WTC11 (cell line): ENCODE measurements at regions of chr11 and their contacts with region 1.

Region 1: GRCh38 chr11:124673333-124674167 is at the starts of genes SIAE and SPA17:
- DNase-seq: peak; percentile 96
- ATAC-seq: peak; percentile 97
- H3K4me3 Mint-ChIP-seq: peak within 1 kb of the TSS; percentile 90
- H3K27ac Mint-ChIP-seq: peak within 1 kb of the TSS; percentile 86
- H3K4me1 Mint-ChIP-seq: peaks cover 11% of the 10 kb centered on the region
- H3K27me3 Mint-ChIP-seq: peaks cover 23% of the 10 kb centered on the region
- CTCF ChIP-seq: no peak
- total RNA-seq, gene SIAE: 4.4 to 4.9 TPM (median 4.8 TPM) in 3 replicates
- total RNA-seq, gene SPA17: 3.5 to 3.8 TPM (median 3.5 TPM) in 3 replicates

Region 2: DNA sequence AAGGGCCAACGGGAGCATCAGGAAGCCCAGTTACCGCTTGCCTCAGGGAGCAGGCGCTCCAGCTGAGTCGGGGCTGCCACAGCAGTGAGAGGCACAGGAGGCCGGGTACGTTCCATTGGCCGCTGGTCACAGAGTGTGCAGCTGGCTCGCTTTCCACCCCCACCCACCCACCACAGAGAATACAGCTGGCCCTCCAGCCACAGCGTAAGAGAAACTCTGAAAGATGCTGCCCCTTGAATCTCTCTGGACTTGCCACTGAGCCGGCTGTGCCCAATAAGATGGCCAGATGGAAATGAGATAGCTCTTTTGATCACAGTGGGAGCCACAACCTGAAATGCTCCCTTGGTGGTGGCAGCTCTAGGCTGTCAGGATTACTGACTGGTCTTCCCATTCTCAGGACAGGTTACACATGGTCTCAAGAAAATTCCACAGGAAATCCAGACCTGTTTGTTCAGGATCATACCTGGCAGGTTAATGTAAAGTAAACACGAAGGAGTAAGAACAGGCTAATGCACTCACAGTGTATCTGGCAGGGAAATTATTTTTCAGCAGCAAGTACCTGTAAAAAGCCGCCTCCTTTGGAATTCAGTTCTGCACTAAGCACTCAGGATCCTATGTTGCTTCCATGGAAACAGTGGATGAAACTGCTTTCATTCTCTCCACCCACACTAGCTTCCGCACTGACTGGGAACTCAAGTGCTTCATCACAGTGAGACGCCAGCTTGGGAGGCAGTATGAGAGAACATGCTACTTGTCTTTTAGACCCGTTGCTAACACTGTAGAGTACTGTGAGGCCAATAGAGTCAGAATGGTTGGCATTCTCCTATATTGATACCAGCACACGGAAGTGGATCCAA is 16.5 kb before region 1 on chr11:
- CTCF ChIA-PET with region 1: interaction called, 10 read pairs
- POLR2A ChIA-PET with region 1: no interaction called
- DNase-seq: peak; percentile 31
- ATAC-seq: peak; percentile 82
- H3K4me3 Mint-ChIP-seq: 0 out of 2 replicates have a peak overlapping the region, but pooled peaks have one; percentile 6
- H3K27ac Mint-ChIP-seq: 0 out of 2 replicates have a peak overlapping the region, but pooled peaks have one; percentile 18
- H3K4me1 Mint-ChIP-seq: peaks cover 20% of the 10 kb centered on the region
- H3K27me3 Mint-ChIP-seq: peaks cover 3% of the 10 kb centered on the region
- CTCF ChIP-seq: no peak

Region 3: GRCh38 chr11:124739479-124740276 is 66.1 kb after region 1 on chr11 and contains the start of gene NRGN:
- CTCF ChIA-PET with region 1: interaction called, 37 read pairs
- POLR2A ChIA-PET with region 1: no interaction called
- DNase-seq: peak; percentile 97
- ATAC-seq: peak; percentile 95
- H3K4me3 Mint-ChIP-seq: peak within 1 kb of the TSS; percentile 77
- H3K27ac Mint-ChIP-seq: no peak within 1 kb of the TSS
- H3K4me1 Mint-ChIP-seq: peaks cover 25% of the 10 kb centered on the region
- H3K27me3 Mint-ChIP-seq: peaks cover 99% of the 10 kb centered on the region
- CTCF ChIP-seq: no peak
- total RNA-seq, gene NRGN: 1.9 to 2.9 TPM (median 2.5 TPM) in 3 replicates

Region 4: GRCh38 chr11:124837491-124837856 is 163.9 kb after region 1 on chr11:
- CTCF ChIA-PET with region 1: interaction called, 19 read pairs
- POLR2A ChIA-PET with region 1: no interaction called
- DNase-seq: no peak
- ATAC-seq: peak; percentile 40
- H3K4me3 Mint-ChIP-seq: no peak overlapping the region
- H3K27ac Mint-ChIP-seq: no peak overlapping the region
- H3K4me1 Mint-ChIP-seq: peaks cover 32% of the 10 kb centered on the region
- H3K27me3 Mint-ChIP-seq: peaks cover 34% of the 10 kb centered on the region
- CTCF ChIP-seq: no peak; the same call in 1 of the 2 replicates

Region 5: DNA sequence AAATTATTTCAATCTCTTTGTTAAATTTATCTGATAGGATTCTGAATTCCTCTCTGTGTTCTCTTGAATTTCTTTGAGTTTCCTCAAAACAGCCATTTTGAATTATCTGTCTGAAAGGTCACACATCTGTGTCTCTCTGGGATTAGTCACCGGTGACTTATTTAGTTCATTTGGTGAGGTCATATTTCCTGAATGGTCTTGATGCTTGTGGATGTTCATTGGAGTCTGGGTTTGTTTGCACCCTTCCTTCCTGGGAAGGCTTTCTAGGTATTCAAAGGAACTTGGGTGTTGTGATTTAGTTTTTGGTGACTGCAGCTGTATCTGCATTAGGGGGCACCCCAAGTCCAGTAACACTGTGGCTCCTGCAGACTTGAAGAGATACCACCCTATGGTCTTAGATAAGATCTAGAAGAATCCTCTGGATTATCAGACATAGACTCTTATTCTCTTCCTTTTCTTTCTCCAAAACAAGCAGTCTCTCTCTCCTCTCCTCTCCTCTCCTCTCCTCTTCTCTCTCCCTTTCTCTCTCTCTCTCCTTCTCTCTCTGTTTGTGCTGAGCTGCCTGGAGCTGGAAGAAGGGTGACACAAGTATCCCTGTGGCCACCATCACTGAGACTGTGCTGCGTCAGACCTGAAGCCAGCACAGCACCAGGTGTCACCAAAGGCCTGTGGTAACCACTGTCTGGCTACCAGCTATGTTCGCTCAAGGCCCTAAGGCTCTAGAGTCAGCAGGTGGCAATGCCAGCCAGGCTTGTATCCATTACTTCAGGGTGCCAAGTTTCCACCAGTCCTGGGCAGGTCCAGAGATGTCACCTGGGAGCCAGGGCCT is 242.2 kb after region 1 on chr11:
- CTCF ChIA-PET with region 1: no interaction called
- POLR2A ChIA-PET with region 1: no interaction called
- DNase-seq: no peak
- ATAC-seq: no peak
- H3K4me3 Mint-ChIP-seq: no peak overlapping the region
- H3K27ac Mint-ChIP-seq: no peak overlapping the region
- H3K4me1 Mint-ChIP-seq: no peaks in the 10 kb centered on the region
- H3K27me3 Mint-ChIP-seq: peaks cover 68% of the 10 kb centered on the region
- CTCF ChIP-seq: no peak

Region 6: DNA sequence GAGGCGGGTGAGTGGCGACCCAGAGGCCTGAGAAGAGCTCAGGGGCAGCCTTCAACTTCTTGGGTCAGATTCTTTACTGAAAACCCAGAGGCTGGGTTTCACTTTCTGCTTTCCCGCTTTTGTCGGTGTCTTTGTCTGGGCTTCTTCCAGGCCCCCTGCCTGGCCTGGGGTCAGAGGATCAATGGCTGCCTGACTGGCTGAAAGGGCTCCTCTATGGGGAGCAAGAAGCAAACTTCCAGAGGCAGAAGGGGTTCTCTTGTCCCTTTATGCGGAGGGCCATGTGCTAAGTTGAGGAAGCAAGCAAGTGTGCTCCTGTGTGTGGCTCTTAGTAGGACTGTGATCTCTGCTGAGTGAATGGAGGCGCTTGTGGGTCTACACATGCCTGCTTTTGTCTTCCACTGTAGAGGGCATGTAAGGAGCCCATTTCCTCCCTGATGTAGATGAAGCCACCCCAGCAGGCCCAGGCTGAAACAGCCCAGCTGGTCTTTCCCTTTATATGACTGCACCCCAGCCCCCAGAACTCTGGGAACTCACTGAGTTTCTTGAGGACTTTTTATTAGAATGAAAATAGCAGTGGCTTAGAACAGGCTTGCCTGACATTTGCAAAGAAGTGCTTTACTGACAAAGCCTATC is 490.0 kb after region 1 on chr11:
- CTCF ChIA-PET with region 1: no interaction called
- POLR2A ChIA-PET with region 1: no interaction called
- DNase-seq: no peak
- ATAC-seq: peak; percentile 38
- H3K4me3 Mint-ChIP-seq: peak overlapping the region; percentile 84
- H3K27ac Mint-ChIP-seq: peak overlapping the region; percentile 95
- H3K4me1 Mint-ChIP-seq: peaks cover 60% of the 10 kb centered on the region
- H3K27me3 Mint-ChIP-seq: peaks cover 48% of the 10 kb centered on the region
- CTCF ChIP-seq: no peak